Tibial artery (tissue), 4 donors: ENCODE measurements at regions of chr1 and their contacts with region 1.

Region 1: GRCh38 chr1:85259118-85259911 is at the start of gene C1orf52:
- DNase-seq: peak; percentile 95 to 97
- H3K4me3 ChIP-seq: peak within 1 kb of the TSS; percentile 73 to 95
- H3K27ac ChIP-seq: peak within 1 kb of the TSS; percentile 71 to 92
- H3K4me1 ChIP-seq: peaks cover 0 to 39% (median 22%) of the 10 kb centered on the region in 4 donors
- H3K27me3 ChIP-seq: no peaks in the 10 kb centered on the region
- CTCF ChIP-seq: peak; percentile 97 to 99

Region 2: GRCh38 chr1:84944767-84945486 is 314.4 kb before region 1 on chr1:
- intact Hi-C with region 1: loop called (anchors 5 kb)
- DNase-seq: peak in 1 of 2 donors; percentile 49
- H3K4me3 ChIP-seq: peak overlapping the region; percentile 47 to 51
- H3K27ac ChIP-seq: peak overlapping the region; percentile 51 to 53
- H3K4me1 ChIP-seq: peaks cover 0 to 9% (median 3%) of the 10 kb centered on the region in 4 donors
- H3K27me3 ChIP-seq: no peaks in the 10 kb centered on the region
- CTCF ChIP-seq: peak; percentile 85 to 96

Region 3: DNA sequence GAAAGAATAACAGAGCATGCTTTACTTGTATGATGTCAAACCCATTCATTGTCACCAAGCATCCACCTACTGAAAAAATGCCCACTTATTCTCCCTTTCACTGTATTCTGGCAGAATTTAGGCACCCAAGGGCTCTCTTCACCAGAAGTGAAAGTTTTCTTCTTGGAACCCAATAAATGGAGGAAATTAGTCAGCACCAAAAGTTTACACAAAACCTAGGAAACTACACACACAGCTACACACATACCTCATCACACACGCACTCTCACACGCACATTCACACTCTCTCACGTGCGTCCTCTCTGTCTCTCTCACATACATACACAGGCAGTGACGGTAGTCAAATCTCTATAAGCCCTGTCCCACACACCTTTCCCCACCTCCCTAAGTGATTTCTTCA is 300.0 kb before region 1 on chr1:
- intact Hi-C with region 1: loop called (anchors 5 kb)
- DNase-seq: no peak
- H3K4me3 ChIP-seq: no peak overlapping the region
- H3K27ac ChIP-seq: peak overlapping the region in 1 of 2 donors; percentile 4
- H3K4me1 ChIP-seq: peaks cover 0 to 20% (median 8%) of the 10 kb centered on the region in 4 donors
- H3K27me3 ChIP-seq: no peaks in the 10 kb centered on the region
- CTCF ChIP-seq: no peak

Region 4: GRCh38 chr1:85109475-85109874 is 149.8 kb before region 1 on chr1:
- intact Hi-C with region 1: loop called (anchors 5 kb)
- DNase-seq: peak in 1 of 2 donors; percentile 40
- H3K4me3 ChIP-seq: no peak overlapping the region
- H3K27ac ChIP-seq: no peak overlapping the region
- H3K4me1 ChIP-seq: no peaks in the 10 kb centered on the region
- H3K27me3 ChIP-seq: peaks cover 0 to 3% of the 10 kb centered on the region in 2 donors
- CTCF ChIP-seq: peak; percentile 75 to 90

Region 5: GRCh38 chr1:85200870-85201339 is 58.4 kb before region 1 on chr1 and contains the start of gene SYDE2:
- intact Hi-C with region 1: loop called (anchors 5 kb)
- DNase-seq: peak; percentile 68 to 87
- H3K4me3 ChIP-seq: peak within 1 kb of the TSS; percentile 70 to 92
- H3K27ac ChIP-seq: peak within 1 kb of the TSS; percentile 96
- H3K4me1 ChIP-seq: peaks cover 0 to 50% (median 5%) of the 10 kb centered on the region in 4 donors
- H3K27me3 ChIP-seq: no peaks in the 10 kb centered on the region
- CTCF ChIP-seq: no peak

Region 6: GRCh38 chr1:85612704-85613361 is 353.5 kb after region 1 on chr1:
- intact Hi-C with region 1: no loop called
- DNase-seq: no peak
- H3K4me3 ChIP-seq: peak overlapping the region in 1 of 2 donors; percentile 2
- H3K27ac ChIP-seq: peak overlapping the region; percentile 53 to 68
- H3K4me1 ChIP-seq: peaks cover 0 to 28% (median 17%) of the 10 kb centered on the region in 4 donors
- H3K27me3 ChIP-seq: no peaks in the 10 kb centered on the region
- CTCF ChIP-seq: peak; percentile 42 to 46